ENCODE measurements at regions of chr12 and their contacts with region 1.

Region 1: DNA sequence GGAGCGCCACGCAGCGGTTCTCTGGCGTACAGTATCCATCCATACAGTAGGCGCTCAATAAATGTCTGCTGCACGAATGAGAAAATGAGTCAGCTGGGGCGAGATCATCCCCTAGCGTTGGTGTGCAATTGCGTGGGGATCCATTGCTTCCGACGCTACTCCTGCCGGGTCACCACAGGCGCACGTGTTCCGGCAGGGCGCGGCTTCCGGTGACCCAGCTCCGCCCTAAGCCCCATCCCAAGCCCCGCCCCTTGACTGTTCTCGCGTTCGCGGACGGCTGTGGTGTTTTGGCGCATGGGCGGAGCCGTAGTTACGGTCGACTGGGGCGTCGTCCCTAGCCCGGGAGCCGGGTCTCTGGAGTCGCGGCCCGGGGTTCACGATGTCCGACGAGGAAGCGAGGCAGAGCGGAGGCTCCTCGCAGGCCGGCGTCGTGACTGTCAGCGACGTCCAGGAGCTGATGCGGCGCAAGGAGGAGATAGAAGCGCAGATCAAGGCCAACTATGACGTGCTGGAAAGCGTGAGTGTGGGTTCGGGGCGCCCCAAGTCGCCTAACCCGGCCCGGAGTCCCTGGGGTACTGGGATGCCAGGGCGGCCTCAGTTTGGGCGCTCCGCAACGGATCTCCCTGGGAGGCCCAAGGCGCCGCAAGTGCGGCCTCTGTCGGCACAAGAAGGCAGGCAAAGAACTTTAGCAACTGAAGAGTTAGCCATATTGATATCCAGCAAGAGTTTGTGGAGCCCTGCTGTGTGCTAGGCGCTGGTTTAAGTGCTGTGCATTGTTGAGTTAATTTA is at the start of gene PSMD9:
- DNase-seq: peak; percentile 99
- ATAC-seq: peak; percentile 100
- H3K4me3 ChIP-seq: peak within 1 kb of the TSS; percentile 36 to 79
- H3K27ac ChIP-seq: peak within 1 kb of the TSS; percentile 33 to 96
- H3K4me1 ChIP-seq: peaks cover 0 to 4% of the 10 kb centered on the region in 2 donors
- H3K27me3 ChIP-seq: no peaks in the 10 kb centered on the region
- total RNA-seq, gene PSMD9: 37.2 to 42.3 TPM

Region 2: DNA sequence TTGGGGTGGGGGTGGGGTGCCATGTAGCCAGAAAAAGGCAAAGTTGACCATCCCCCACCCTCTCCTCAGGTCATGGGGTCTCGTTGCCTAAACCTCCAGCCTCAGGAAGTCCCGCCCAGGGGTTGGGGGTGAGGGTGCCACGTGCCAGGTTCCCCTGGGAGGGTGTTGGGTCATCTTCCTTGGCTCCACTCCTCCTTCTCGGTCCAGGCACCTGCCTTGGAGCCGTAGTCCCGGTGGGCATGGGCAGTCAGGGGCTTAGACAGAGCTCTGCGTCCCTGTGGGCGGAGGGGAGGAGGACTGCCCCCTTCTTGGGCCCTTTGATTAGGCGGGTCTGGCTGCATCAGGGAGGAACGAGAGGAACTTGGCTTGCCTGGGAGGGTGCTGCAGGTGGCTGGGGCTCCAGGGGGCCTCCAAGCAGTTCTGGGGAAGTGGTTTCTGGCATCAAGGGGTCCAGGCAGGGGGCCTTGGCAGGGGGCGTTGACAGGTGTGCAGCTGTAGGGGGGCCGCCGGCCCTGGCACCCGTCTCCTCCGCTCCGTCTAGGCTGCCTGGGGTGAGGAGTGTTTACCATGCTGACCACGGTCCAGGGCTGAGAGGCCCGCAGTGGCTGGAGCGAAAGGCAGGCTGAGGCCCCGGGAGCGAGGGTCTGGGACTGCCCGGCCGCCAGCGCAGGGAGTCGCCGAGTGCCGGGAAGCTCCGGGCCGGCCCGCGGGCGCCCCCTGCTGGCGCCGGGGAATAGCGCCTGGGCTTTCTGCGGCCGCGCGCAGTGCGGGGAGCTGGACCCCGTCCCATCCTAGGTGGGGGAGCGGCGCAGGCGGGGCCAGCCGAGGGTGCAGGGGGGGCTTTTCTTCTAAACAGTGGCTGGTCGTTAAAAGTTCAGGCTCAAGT is 77.0 kb before region 1 on chr12:
- intact Hi-C with region 1: loop called in 1 of 2 experiments (anchors 1 kb)
- DNase-seq: peak; percentile 79 to 92
- ATAC-seq: peak; percentile 94
- H3K4me3 ChIP-seq: peak overlapping the region; percentile 47 to 67
- H3K27ac ChIP-seq: peak overlapping the region in 1 of 2 donors; percentile 34
- H3K4me1 ChIP-seq: no peaks in the 10 kb centered on the region
- H3K27me3 ChIP-seq: no peaks in the 10 kb centered on the region

Region 3: GRCh38 chr12:121839106-121839992 is 49.3 kb before region 1 on chr12:
- intact Hi-C with region 1: loop called (anchors 2 to 5 kb)
- DNase-seq: peak; percentile 100
- ATAC-seq: peak; percentile 99
- H3K4me3 ChIP-seq: peak overlapping the region; percentile 47 to 60
- H3K27ac ChIP-seq: no peak overlapping the region
- H3K4me1 ChIP-seq: no peaks in the 10 kb centered on the region
- H3K27me3 ChIP-seq: no peaks in the 10 kb centered on the region

Region 4: DNA sequence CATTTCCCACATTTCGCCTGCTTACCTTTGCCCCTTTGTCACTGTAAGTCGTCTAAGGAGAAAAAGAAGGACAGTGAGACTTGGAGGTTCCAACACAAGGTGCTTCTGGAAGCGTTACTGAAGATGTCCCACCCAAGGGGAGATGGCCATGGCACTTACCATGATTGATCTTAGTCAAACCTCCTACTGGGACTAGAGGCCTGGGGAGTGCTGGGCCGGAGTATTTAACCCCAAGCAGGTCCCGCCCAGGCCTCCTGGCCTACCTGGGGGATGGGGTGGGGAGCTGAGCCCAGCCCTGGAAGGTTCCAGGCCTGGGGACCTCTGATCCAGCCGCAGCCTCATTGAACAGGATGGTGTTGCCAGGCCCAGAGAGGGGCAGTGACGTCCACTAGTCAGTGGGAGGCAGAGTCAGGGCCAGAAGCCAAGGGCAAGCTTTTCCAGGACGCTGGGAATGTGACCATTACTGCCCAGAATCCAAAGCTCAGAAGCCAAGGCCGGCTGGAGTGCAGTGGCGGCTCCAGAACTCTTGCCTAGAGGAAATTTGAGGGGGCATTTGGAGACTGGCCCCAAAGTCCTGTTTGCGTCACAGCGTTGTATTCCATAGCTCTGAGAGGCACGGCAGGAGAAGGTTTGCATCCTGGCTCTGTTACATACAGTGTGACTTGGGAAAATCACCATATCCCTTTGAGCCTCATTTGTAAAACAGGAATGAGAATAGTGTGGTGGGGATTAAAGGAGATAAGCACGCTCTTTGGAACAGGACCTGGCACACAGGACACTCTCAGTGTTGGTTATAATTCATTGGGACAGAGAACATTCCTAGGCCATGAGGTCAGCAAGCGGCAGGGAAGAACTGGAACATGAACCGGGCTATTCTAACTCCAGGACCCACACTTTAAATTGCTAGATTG is 29.8 kb before region 1 on chr12 and contains the start of gene HPD:
- intact Hi-C with region 1: loop called in 1 of 2 experiments (anchors 2 kb)
- DNase-seq: peak; percentile 89 to 92
- ATAC-seq: peak; percentile 86
- H3K4me3 ChIP-seq: no peak within 1 kb of the TSS
- H3K27ac ChIP-seq: peak within 1 kb of the TSS; percentile 94 to 99
- H3K4me1 ChIP-seq: peaks cover 0 to 3% of the 10 kb centered on the region in 2 donors
- H3K27me3 ChIP-seq: no peaks in the 10 kb centered on the region
- total RNA-seq, gene HPD: 3.1 to 5.2 TPM